ENCODE measurements at regions of chr9 and their contacts with region 1.

Region 1: GRCh38 chr9:18208154-18209059 is 265.5 kb upstream of the ADAMTSL1 start:
- DNase-seq: peak; percentile 46 to 67
- H3K4me3 ChIP-seq: no peak overlapping the region
- H3K27ac ChIP-seq: no peak overlapping the region
- H3K4me1 ChIP-seq: peaks cover 0 to 4% (median 0%) of the 10 kb centered on the region in 4 experiments; a peak in 1 of 7 replicates
- H3K27me3 ChIP-seq: no peaks in the 10 kb centered on the region
- CTCF ChIP-seq: peak; percentile 47 to 79 (median 76)
- EP300 ChIP-seq: no peak
- POLR2A ChIP-seq: no peak
- RAD21 ChIP-seq: peak; percentile 79 to 83

Region 2: DNA sequence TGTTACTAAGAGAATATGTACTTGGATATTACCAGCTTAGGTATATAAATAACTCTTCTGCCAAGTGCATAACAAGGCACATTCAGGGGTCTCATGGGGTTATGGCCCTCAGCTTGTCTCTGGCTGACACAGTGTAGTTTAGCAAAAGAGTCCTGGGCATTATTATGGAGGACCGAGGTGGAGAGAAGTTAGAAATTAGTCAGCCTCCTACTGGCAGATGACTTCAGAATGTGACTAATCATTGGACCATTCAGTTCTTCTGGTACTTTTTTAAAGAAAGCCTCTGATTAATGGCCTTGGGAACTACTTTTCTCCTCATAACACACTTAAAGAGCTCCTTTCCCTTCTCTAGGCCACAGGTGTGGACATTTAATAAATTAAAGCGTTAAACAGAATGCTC is 450.6 kb before region 1 on chr9:
- CTCF ChIA-PET with region 1: no interaction called
- POLR2A ChIA-PET with region 1: no interaction called
- DNase-seq: no peak
- H3K4me3 ChIP-seq: no peak overlapping the region
- H3K27ac ChIP-seq: no peak overlapping the region
- H3K4me1 ChIP-seq: no peaks in the 10 kb centered on the region
- H3K27me3 ChIP-seq: no peaks in the 10 kb centered on the region
- CTCF ChIP-seq: no peak
- EP300 ChIP-seq: no peak
- POLR2A ChIP-seq: no peak
- RAD21 ChIP-seq: no peak

Region 3: DNA sequence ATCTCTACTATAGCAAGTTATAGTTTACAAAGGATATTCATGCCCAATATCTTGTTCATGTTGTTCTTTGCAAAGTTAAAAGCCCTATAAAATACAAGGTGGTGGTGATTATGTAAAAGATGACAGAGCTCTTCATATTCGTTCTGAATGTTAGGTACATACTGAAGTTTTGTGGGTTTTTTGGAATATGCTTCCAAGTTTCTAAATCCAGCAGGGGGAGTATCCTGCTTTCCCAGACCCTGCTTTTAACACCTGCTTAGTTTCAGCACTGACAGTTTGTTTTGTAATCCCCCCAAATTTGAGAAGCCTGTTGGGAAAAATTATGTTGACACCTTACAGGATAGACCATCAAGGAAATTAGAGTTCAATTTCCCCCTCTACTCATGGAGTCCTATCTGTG is 191.3 kb before region 1 on chr9:
- CTCF ChIA-PET with region 1: interaction called, 12 read pairs
- POLR2A ChIA-PET with region 1: no interaction called
- DNase-seq: no peak
- H3K4me3 ChIP-seq: no peak overlapping the region
- H3K27ac ChIP-seq: no peak overlapping the region
- H3K4me1 ChIP-seq: no peaks in the 10 kb centered on the region; a peak in 1 of 7 replicates
- H3K27me3 ChIP-seq: no peaks in the 10 kb centered on the region
- CTCF ChIP-seq: peak in 2 of 3 experiments; percentile 15 to 29; a peak in 2 of 4 replicates
- EP300 ChIP-seq: no peak
- POLR2A ChIP-seq: no peak
- RAD21 ChIP-seq: peak; percentile 28 to 45

Region 4: GRCh38 chr9:18189871-18190670 is 18.3 kb before region 1 on chr9:
- CTCF ChIA-PET with region 1: interaction called, 24 read pairs
- POLR2A ChIA-PET with region 1: interaction called, 3 read pairs
- DNase-seq: no peak
- H3K4me3 ChIP-seq: no peak overlapping the region
- H3K27ac ChIP-seq: no peak overlapping the region
- H3K4me1 ChIP-seq: no peaks in the 10 kb centered on the region
- H3K27me3 ChIP-seq: no peaks in the 10 kb centered on the region
- CTCF ChIP-seq: no peak
- EP300 ChIP-seq: no peak
- POLR2A ChIP-seq: no peak
- RAD21 ChIP-seq: no peak

Region 5: GRCh38 chr9:18195223-18195622 is 13.2 kb before region 1 on chr9:
- CTCF ChIA-PET with region 1: interaction called, 24 read pairs
- POLR2A ChIA-PET with region 1: interaction called, 3 read pairs
- DNase-seq: no peak
- H3K4me3 ChIP-seq: no peak overlapping the region
- H3K27ac ChIP-seq: no peak overlapping the region
- H3K4me1 ChIP-seq: no peaks in the 10 kb centered on the region
- H3K27me3 ChIP-seq: no peaks in the 10 kb centered on the region
- CTCF ChIP-seq: no peak
- EP300 ChIP-seq: no peak
- POLR2A ChIP-seq: no peak
- RAD21 ChIP-seq: no peak

Measured in H1 (cell line).